SK-N-SH (cell line): ENCODE measurements at regions of chr4 and their contacts with region 1.

Region 1: DNA sequence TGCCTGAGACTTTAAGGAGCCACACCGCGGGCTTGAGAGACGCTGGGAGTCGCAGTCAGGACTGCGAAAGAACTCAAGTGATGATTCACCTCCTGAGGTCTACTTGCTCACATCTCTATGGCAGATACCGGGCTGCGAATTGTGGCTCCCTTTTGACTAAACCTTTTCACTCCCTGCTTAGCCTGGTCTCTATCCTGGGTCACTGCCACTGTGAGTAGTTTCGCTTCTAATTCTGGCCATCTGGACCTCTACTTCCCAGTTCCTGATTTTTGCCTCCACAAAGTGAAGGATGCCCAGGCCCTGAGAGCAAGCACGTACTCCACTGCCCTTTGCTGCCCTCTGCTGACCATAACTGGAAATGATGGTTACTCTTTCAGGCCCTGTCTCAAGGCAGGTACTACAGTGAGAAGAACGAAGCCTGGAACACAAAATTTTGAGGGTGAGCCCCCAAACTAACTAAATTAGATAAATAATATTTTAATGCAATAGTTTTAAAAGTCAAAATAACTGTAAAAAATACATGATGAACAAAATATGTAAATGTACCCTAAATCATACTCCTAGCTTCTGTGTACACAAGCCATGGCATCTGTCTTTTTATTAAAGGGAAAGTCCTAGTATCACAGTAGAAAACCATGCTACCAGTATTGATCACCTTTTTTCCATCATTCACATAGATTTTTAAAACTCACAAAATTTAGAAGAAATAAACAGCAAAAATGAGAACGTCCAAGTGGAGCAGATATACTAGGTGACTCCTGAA is 16.7 kb downstream of the MAD2L1 start:
- DNase-seq: peak; percentile 56
- H3K4me3 ChIP-seq: 0 out of 4 replicates have a peak overlapping the region, but pooled peaks of 1 of the 2 experiments have one; percentile 33
- H3K27ac ChIP-seq: no peak overlapping the region
- H3K4me1 ChIP-seq: peaks cover 0 to 3% of the 10 kb centered on the region in 2 experiments; a peak in 1 of 4 replicates
- H3K27me3 ChIP-seq: no peaks in the 10 kb centered on the region
- CTCF ChIP-seq: peak; percentile 86
- EP300 ChIP-seq: no peak
- RAD21 ChIP-seq: peak; percentile 98

Region 2: DNA sequence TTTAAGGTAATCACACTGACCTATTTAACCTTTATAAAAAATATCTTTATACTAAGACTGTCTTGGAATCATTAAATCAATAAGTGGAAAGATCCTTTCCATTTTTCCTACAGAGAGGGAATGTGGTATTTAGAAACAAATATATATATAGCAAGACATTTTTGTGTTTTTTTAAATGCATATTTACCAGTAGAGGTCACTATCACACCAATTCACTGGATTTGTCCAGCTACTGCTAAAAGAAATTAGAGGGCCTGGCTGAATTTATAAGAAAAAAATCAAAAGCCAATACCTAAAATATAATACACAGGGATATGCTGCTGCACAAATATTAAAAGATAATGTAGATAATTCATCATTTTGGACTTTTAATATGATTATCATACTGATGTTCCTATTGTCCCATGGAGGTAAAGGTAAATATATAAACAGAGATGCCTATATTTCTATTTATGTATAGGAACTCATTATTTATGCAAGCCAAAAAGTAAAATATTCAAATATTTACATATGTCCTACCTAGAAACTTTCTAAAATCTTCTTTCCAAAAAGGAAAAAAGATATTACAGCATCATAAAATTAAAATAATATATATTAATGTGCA is 490.8 kb before region 1 on chr4:
- CTCF ChIA-PET with region 1: interaction called, 64 read pairs
- POLR2A ChIA-PET with region 1: no interaction called
- DNase-seq: peak; percentile 45
- H3K4me3 ChIP-seq: peak overlapping the region in 1 of 2 experiments; percentile 3; a peak in 1 of 4 replicates
- H3K27ac ChIP-seq: no peak overlapping the region
- H3K4me1 ChIP-seq: no peaks in the 10 kb centered on the region; a peak in 1 of 4 replicates
- H3K27me3 ChIP-seq: no peaks in the 10 kb centered on the region
- CTCF ChIP-seq: peak; percentile 75
- EP300 ChIP-seq: no peak
- RAD21 ChIP-seq: peak; percentile 78